ENCODE measurements at regions of chr1 and their contacts with region 1.

Region 1: GRCh38 chr1:26874896-26875295 is 11.9 kb downstream of the SFN start:
- DNase-seq: no peak
- H3K4me3 ChIP-seq: no peak overlapping the region
- H3K4me3 Mint-ChIP-seq: no peak overlapping the region
- H3K27ac ChIP-seq: no peak overlapping the region
- H3K27ac Mint-ChIP-seq: no peak overlapping the region
- H3K4me1 ChIP-seq: no peaks in the 10 kb centered on the region
- H3K4me1 Mint-ChIP-seq: no peaks in the 10 kb centered on the region
- H3K27me3 ChIP-seq: no peaks in the 10 kb centered on the region
- H3K27me3 Mint-ChIP-seq: peaks cover 0 to 2% (median 0%) of the 10 kb centered on the region in 3 donors
- CTCF ChIP-seq: no peak

Region 2: GRCh38 chr1:26811057-26811456 is 63.8 kb before region 1 on chr1:
- intact Hi-C with region 1: loop called (anchors 5 kb)
- DNase-seq: no peak
- H3K4me3 ChIP-seq: no peak overlapping the region
- H3K4me3 Mint-ChIP-seq: no peak overlapping the region
- H3K27ac ChIP-seq: no peak overlapping the region
- H3K27ac Mint-ChIP-seq: no peak overlapping the region
- H3K4me1 ChIP-seq: peaks cover 29 to 45% of the 10 kb centered on the region in 2 donors
- H3K4me1 Mint-ChIP-seq: peaks cover 37% of the 10 kb centered on the region
- H3K27me3 ChIP-seq: no peaks in the 10 kb centered on the region
- H3K27me3 Mint-ChIP-seq: peaks cover 0 to 3% (median 0%) of the 10 kb centered on the region in 3 donors
- CTCF ChIP-seq: no peak

Region 3: DNA sequence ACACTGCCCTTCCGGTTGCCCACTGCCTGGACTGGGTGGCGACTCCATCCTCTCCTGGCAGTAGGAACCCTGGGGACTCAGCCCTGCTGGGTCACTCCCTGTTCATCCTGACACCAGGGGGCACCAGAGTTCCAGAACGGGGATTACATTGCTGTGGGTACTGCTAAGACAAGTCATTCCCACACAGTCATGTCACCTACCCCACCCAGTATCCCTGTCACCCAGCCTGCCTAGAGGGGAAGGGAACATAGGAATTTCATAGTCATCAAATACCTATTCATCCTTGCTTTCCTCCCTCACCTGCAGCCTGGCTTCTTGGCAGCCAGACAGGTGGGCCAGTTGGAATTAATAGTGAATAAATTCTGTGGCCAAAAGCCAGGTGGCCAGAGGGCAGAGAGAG is 21.7 kb before region 1 on chr1:
- intact Hi-C with region 1: loop called (anchors 1 to 2 kb)
- DNase-seq: peak; percentile 60 to 75 (median 71)
- H3K4me3 ChIP-seq: no peak overlapping the region
- H3K4me3 Mint-ChIP-seq: no peak overlapping the region
- H3K27ac ChIP-seq: no peak overlapping the region
- H3K27ac Mint-ChIP-seq: peak overlapping the region in 1 of 7 donors; percentile 13
- H3K4me1 ChIP-seq: no peaks in the 10 kb centered on the region
- H3K4me1 Mint-ChIP-seq: no peaks in the 10 kb centered on the region
- H3K27me3 ChIP-seq: no peaks in the 10 kb centered on the region
- H3K27me3 Mint-ChIP-seq: no peaks in the 10 kb centered on the region
- CTCF ChIP-seq: peak; percentile 82

Measured in CD14-positive monocyte (primary cell).